Activated B cell treated with CpG ODN at 0.5 μM for 24 hours (primary cell): ENCODE measurements at regions of chr20 and their contacts with region 1.

Region 1: DNA sequence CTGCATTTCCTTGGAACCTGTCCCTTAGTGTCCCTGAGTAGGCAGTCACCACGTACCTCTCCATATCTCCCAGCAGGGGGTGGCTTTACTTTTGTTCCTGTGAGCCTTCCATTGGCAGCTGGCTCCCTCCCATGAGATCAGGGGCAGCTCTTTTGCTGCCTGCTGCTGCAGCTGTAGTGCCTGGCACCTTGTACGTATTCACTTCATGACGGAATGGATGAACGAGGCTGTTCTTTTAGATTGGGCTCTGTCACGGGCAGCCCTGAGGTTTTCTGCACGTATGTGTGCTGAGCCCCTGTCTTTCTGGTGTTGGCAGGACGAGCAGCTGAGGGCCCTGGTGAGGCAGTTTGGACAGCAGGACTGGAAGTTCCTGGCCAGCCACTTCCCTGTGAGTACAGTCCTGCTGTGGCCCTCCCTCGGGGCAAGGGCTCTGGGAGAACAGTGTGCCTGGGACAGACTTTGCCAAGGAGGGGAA is 14.6 kb downstream of the MYBL2 start:
- DNase-seq: peak; percentile 52
- ATAC-seq: peak; percentile 40
- H3K4me3 Mint-ChIP-seq: peak overlapping the region; percentile 73
- H3K27ac Mint-ChIP-seq: peak overlapping the region; percentile 97
- H3K4me1 Mint-ChIP-seq: peaks cover 64% of the 10 kb centered on the region
- H3K27me3 Mint-ChIP-seq: no peaks in the 10 kb centered on the region
- CTCF ChIP-seq: no peak

Region 2: GRCh38 chr20:43456809-43457639 is 224.5 kb before region 1 on chr20:
- CTCF ChIA-PET with region 1: no interaction called
- POLR2A ChIA-PET with region 1: interaction called, 13 read pairs
- intact Hi-C with region 1: loop called (anchors 1 kb)
- DNase-seq: no peak
- ATAC-seq: peak; percentile 83
- H3K4me3 Mint-ChIP-seq: peak overlapping the region; percentile 95
- H3K27ac Mint-ChIP-seq: peak overlapping the region; percentile 98
- H3K4me1 Mint-ChIP-seq: peaks cover 31% of the 10 kb centered on the region
- H3K27me3 Mint-ChIP-seq: peaks cover 5% of the 10 kb centered on the region
- CTCF ChIP-seq: no peak

Region 3: DNA sequence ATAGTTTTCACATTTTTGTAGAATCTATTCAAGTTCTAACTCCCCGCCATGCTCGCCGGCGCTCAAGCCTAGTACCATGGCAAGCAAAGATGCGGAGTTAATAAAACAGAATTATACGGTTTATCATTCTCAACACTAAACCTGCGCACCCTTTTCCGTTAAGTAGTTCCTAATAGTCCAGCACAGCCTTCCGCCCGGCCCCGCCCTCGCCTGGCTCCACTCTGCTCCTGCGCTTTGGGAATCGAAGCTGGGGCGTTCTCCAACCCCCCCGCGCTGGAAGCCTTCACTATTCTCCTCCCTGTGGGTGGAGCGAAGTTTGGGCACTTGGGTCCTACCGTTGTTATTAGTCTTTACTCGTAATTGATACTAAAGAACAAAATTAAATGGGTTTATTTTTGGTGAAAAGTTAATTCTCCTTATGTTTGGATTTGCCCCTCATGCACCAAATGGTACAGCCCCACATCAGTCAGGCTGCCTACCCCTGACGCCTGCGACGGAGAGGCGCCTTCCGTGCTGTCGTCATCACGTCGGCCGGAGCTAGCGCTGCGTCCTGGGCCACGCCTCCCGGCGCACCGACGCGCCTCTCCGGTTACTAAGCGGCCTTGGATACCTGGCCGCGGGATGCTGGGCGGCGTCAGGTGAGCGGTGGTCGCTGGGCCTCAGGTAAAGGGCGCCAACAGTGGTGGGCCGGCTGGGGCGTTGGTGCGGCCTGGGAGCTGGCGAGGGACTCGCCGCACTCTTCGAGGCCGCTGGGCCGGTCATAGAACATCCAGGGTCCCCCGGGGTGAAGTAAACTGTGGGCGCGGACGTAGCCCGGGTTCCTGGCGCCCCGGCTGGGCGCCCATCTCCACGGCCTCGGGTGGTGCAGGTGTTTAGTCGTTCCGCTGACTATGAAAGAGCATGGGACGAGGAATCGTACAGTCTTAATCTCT is 90.8 kb before region 1 on chr20 and contains the start of gene IFT52:
- CTCF ChIA-PET with region 1: interaction called, 4 read pairs
- POLR2A ChIA-PET with region 1: interaction called, 16 read pairs
- intact Hi-C with region 1: loop called (anchors 1 kb)
- DNase-seq: peak; percentile 83
- ATAC-seq: peak; percentile 97
- H3K4me3 Mint-ChIP-seq: peak within 1 kb of the TSS; percentile 94
- H3K27ac Mint-ChIP-seq: peak within 1 kb of the TSS; percentile 95
- H3K4me1 Mint-ChIP-seq: peaks cover 17% of the 10 kb centered on the region
- H3K27me3 Mint-ChIP-seq: peaks cover 2% of the 10 kb centered on the region
- CTCF ChIP-seq: no peak
- total RNA-seq, gene IFT52: 18.7 and 20.8 TPM in 2 replicates

Region 4: GRCh38 chr20:43691928-43692524 is 10.5 kb after region 1 on chr20:
- CTCF ChIA-PET with region 1: interaction called, 9 read pairs
- POLR2A ChIA-PET with region 1: interaction called, 17 read pairs
- intact Hi-C with region 1: loop called (anchors 1 kb)
- DNase-seq: peak; percentile 63
- ATAC-seq: peak; percentile 89
- H3K4me3 Mint-ChIP-seq: no peak overlapping the region
- H3K27ac Mint-ChIP-seq: peak overlapping the region; percentile 6
- H3K4me1 Mint-ChIP-seq: peaks cover 21% of the 10 kb centered on the region
- H3K27me3 Mint-ChIP-seq: no peaks in the 10 kb centered on the region
- CTCF ChIP-seq: peak; percentile 38

Region 5: GRCh38 chr20:43728044-43728529 is 46.6 kb after region 1 on chr20:
- CTCF ChIA-PET with region 1: no interaction called
- POLR2A ChIA-PET with region 1: interaction called, 8 read pairs
- intact Hi-C with region 1: loop called (anchors 2 kb)
- DNase-seq: no peak
- ATAC-seq: peak; percentile 34
- H3K4me3 Mint-ChIP-seq: no peak overlapping the region
- H3K27ac Mint-ChIP-seq: no peak overlapping the region
- H3K4me1 Mint-ChIP-seq: peaks cover 38% of the 10 kb centered on the region
- H3K27me3 Mint-ChIP-seq: no peaks in the 10 kb centered on the region
- CTCF ChIP-seq: no peak

Region 6: DNA sequence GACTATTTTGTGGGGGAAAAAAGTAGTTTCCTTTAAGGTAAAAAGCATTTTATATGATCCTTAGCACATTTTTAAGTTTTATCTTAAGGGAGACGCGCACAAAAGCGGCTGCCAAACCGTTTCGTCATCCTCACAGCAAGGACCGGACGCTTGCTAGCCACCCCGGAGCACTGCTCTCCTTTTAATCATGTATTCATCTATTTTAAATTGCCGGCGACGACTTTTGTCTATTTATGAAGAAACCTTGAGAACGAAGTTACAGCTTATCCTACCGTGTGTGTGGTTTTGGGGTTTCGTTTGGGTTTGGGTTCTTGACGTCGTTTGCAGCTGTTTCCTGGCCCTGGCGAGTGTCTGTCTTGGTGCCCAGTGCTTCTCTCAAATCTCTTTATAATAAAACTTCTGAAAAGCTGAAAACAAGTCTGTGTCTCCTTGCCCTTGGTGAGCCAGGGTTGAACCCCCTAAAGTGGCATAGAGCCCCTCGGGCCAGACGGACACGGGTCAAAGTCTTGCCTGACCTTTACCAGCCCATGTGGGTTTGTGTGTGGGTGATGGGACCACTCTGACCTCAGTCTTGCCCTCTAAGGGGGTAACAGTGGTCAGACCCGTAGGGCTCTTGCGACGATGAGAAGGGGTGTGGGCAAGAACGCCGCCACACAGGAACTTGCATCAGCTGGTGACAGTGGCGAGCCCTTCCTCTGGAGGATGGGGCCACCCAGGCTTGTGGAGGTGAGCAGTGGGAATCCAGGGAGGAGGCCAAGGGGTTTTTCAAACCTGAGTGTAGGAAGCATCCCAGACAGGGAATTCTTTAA is 387.9 kb after region 1 on chr20:
- CTCF ChIA-PET with region 1: no interaction called
- POLR2A ChIA-PET with region 1: interaction called, 11 read pairs
- intact Hi-C with region 1: loop called (anchors 1 kb)
- DNase-seq: peak; percentile 44
- ATAC-seq: peak; percentile 60
- H3K4me3 Mint-ChIP-seq: peak overlapping the region; percentile 80
- H3K27ac Mint-ChIP-seq: peak overlapping the region; percentile 88
- H3K4me1 Mint-ChIP-seq: peaks cover 39% of the 10 kb centered on the region
- H3K27me3 Mint-ChIP-seq: peaks cover 5% of the 10 kb centered on the region
- CTCF ChIP-seq: no peak

Region 7: GRCh38 chr20:44582311-44583025 is 901.0 kb after region 1 on chr20 and contains the start of gene PKIG:
- CTCF ChIA-PET with region 1: no interaction called
- POLR2A ChIA-PET with region 1: interaction called, 3 read pairs
- intact Hi-C with region 1: loop called (anchors 5 kb)
- DNase-seq: no peak
- ATAC-seq: no peak
- H3K4me3 Mint-ChIP-seq: peak within 1 kb of the TSS; percentile 94
- H3K27ac Mint-ChIP-seq: peak within 1 kb of the TSS; percentile 96
- H3K4me1 Mint-ChIP-seq: peaks cover 79% of the 10 kb centered on the region
- H3K27me3 Mint-ChIP-seq: no peaks in the 10 kb centered on the region
- CTCF ChIP-seq: no peak
- total RNA-seq, gene PKIG: 181 and 191 TPM in 2 replicates